Caco-2 (cell line): ENCODE measurements at regions of chr13 and their contacts with region 1.

Region 1: GRCh38 chr13:23707674-23708073 is 137.5 kb downstream of the TNFRSF19 start:
- DNase-seq: peak in 1 of 2 experiments; percentile 40
- H3K4me3 ChIP-seq: no peak overlapping the region
- H3K4me3 Mint-ChIP-seq: no peak overlapping the region
- H3K27ac Mint-ChIP-seq: no peak overlapping the region
- H3K4me1 ChIP-seq: no peaks in the 10 kb centered on the region
- H3K4me1 Mint-ChIP-seq: peaks cover 11% of the 10 kb centered on the region
- H3K27me3 ChIP-seq: no peaks in the 10 kb centered on the region
- H3K27me3 Mint-ChIP-seq: no peaks in the 10 kb centered on the region
- CTCF ChIP-seq: peak in 1 of 2 experiments; percentile 17

Region 2: GRCh38 chr13:23510979-23511735 is 196.5 kb before region 1 on chr13:
- CTCF ChIA-PET with region 1: no interaction called
- POLR2A ChIA-PET with region 1: no interaction called
- intact Hi-C with region 1: loop called (anchors 1 kb)
- DNase-seq: peak; percentile 48 to 58
- H3K4me3 ChIP-seq: no peak overlapping the region
- H3K4me3 Mint-ChIP-seq: no peak overlapping the region
- H3K27ac Mint-ChIP-seq: no peak overlapping the region
- H3K4me1 ChIP-seq: peaks cover 13% of the 10 kb centered on the region
- H3K4me1 Mint-ChIP-seq: peaks cover 7% of the 10 kb centered on the region
- H3K27me3 ChIP-seq: no peaks in the 10 kb centered on the region
- H3K27me3 Mint-ChIP-seq: no peaks in the 10 kb centered on the region
- CTCF ChIP-seq: peak; percentile 40 to 62